AG04449 (cell line): ENCODE measurements at regions of chr3 and their contacts with region 1.

Region 1: DNA sequence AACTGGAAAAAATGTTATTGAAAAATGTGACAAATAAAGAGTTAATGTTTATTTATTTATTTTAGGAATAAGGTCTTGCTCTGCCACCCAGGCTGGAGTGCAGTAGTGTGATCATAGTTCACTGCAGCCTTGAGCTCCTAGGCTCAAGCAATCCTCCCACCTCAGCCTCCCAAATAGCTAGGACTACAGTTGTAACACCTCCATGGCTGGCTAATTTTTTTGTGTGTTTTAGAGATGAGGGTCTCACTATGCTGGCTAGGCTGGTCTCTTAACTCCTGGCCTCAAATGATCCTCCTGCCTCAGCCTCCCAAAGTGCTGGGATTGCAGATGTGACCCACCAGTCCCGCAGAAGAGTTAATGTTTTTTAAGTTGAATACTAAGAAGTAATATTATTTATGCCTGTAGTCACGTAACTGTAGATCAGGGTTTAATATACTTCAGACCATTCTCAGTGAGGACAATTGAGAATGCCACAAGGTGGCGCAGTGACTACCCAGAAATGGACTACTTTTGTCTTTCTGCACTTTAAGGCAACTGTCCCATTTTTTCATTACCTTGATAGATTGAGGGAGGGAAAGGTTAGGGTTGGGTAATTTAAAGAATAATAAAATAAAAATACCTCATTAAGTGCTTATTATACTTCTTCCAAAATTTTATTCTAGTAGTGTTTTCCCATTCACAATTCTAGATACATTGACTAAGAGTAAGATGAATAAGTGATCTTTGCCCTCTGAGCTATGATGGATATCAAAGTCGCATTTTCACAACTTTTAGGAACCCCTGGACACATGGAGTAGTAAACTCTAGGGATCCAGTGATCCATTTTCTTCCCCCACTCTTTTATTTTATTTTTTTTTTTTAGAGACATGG is 6.0 kb downstream of the MUC13 start:
- DNase-seq: no peak
- H3K4me3 ChIP-seq: no peak overlapping the region
- CTCF ChIP-seq: peak; percentile 75

Region 2: GRCh38 chr3:124837730-124838186 is 90.8 kb before region 1 on chr3:
- CTCF ChIA-PET with region 1: no interaction called
- POLR2A ChIA-PET with region 1: no interaction called
- DNase-seq: no peak
- H3K4me3 ChIP-seq: no peak overlapping the region
- CTCF ChIP-seq: no peak

Region 3: DNA sequence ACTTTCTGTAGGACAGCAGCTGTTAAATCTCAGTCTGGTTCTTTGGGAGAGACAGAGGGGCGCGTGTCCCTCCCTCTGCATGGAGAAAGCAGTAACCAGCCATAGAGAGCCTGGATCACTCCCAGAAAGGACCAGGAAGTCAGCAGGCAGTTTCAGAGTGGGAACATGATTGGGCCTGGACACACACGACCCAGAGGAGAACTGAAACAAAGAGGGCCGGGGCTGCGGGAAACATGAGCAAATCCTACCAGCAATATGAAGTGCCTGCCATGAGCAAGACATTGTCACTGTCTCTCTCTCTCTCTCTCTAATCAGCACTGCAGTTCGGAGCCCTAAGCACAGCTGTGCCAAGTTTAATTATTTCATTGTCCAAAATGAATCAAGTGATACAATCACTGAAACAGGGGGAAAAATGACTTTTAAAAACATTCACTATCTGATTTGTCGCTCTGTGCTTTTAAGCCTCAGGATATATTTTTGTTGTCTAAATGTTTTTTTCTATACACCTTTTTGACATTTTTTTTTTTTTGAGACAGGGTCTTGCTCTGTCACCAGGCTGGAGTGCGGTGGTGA is 11.6 kb before region 1 on chr3:
- CTCF ChIA-PET with region 1: interaction called, 14 read pairs
- POLR2A ChIA-PET with region 1: no interaction called
- DNase-seq: no peak
- H3K4me3 ChIP-seq: no peak overlapping the region
- CTCF ChIP-seq: no peak

Region 4: DNA sequence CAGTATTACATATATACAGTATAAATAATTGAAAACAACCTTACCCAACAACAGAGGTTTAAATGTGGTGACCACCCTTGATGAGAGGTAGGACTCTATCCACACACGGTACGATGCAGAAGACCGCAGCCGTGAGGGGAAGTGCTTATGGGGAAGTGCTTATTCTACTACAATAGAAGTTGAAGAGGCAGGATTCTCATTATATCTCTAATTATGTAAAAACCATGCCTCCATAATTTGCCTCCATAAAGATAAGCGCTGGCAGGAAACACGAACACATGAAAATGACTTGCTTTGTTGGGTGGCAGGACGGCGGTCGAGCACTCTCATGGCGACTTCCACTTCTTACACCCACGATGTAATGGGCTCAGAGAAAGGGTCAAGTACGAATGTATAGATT is 13.2 kb after region 1 on chr3:
- CTCF ChIA-PET with region 1: interaction called, 47 read pairs
- POLR2A ChIA-PET with region 1: interaction called, 3 read pairs
- DNase-seq: no peak
- H3K4me3 ChIP-seq: no peak overlapping the region
- CTCF ChIP-seq: no peak

Region 5: DNA sequence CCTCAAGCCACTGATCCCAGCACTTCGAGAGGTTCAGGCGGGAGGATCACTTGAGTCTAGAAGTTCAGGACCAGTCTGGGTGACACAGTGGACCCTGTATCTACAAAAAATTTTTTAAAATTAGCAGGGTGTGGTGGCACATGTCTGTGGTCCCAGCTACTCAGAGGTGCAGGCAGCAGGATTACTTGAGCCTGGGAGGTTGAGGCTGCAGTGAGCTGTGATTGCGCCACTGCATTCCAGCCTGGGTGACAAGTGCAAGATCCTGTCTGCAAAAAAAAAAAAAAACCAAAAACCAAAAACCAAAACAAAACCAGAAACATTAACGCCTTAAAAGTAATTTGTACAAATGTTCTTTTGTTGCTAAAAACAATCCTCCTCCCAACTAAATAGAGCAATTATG is 311.9 kb after region 1 on chr3:
- CTCF ChIA-PET with region 1: no interaction called
- POLR2A ChIA-PET with region 1: no interaction called
- DNase-seq: no peak
- H3K4me3 ChIP-seq: no peak overlapping the region
- CTCF ChIP-seq: no peak